ENCODE measurements at regions of chr12 and their contacts with region 1.

Region 1: DNA sequence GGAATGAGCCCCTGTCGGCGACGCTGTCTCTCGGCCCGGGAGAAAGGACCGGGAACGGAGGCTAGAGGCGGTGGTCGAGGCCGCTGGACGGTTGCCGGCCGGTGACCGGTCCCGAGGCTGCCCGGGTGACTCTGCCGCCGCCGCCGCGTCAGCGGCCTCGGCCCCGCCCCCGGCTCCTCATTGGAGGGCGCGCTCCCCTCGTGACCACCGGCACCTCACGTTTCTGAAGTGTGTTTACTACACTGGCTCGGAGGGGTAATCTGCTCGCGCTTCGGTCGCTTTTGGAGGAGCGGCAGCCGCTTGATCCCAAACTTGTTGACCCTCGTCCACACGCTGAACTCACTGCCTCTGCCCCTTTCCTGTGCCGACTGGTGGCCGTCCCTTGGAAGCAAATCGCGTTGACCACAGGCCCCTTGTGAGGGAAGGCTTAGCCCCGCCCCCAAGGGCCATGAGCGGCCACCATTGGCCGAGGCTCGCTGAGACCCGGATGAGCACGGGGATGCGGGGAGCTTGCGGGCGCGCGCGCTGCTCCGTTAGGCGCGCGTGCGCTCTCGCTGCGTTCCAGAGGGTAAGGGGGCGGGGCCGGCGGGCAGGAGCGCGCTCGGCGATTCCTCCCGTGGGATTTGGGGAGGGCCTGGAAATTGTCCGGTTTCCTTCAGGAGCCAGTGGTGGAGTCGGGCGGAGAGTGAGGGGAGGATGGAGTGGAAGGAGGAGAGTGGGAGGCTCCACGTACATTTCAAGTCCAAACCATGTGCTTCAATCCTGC is at the start of gene CRY1:
- DNase-seq: peak; percentile 93
- H3K4me3 ChIP-seq: peak within 1 kb of the TSS; percentile 93
- H3K27ac ChIP-seq: peak within 1 kb of the TSS; percentile 93 to 97
- H3K4me1 ChIP-seq: peaks cover 4% of the 10 kb centered on the region
- H3K27me3 ChIP-seq: no peaks in the 10 kb centered on the region
- CTCF ChIP-seq: no peak
- POLR2A ChIP-seq: peak; percentile 83
- total RNA-seq, gene CRY1: 15.7 to 35.2 TPM

Region 2: GRCh38 chr12:106774005-106774807 is 319.4 kb before region 1 on chr12 and contains the start of gene RIC8B:
- intact Hi-C with region 1: loop called (anchors 10 kb)
- DNase-seq: peak; percentile 95
- H3K4me3 ChIP-seq: peak within 1 kb of the TSS; percentile 84 to 87
- H3K27ac ChIP-seq: peak within 1 kb of the TSS; percentile 90 to 95
- H3K4me1 ChIP-seq: peaks cover 4% of the 10 kb centered on the region
- H3K27me3 ChIP-seq: no peaks in the 10 kb centered on the region
- CTCF ChIP-seq: peak in 2 of 4 experiments; percentile 27 to 38
- POLR2A ChIP-seq: peak; percentile 49
- total RNA-seq, gene RIC8B: 9.2 to 12.4 TPM

Region 3: DNA sequence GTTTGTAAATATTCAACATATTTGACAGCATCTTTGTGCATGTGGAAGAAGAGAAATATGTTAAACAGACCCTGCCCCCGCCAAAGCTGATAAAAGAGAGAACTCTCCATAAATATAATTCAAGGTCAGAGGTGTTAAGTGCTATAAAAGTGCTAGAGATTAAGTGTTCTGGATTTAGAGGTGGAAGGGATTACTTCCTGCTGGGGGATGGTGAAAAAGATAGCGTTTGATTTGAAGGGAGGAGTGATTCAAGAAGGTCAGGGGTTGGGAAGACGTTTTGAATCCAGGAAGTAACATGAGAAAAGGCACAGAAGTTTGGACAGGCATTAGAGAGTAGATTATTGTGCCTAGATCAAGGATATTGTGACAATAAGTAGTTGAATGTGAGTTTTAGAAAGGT is 288.9 kb before region 1 on chr12:
- intact Hi-C with region 1: no loop called
- DNase-seq: no peak
- H3K4me3 ChIP-seq: no peak overlapping the region
- H3K27ac ChIP-seq: no peak overlapping the region
- H3K4me1 ChIP-seq: no peaks in the 10 kb centered on the region
- H3K27me3 ChIP-seq: no peaks in the 10 kb centered on the region
- CTCF ChIP-seq: no peak
- POLR2A ChIP-seq: no peak

Region 4: DNA sequence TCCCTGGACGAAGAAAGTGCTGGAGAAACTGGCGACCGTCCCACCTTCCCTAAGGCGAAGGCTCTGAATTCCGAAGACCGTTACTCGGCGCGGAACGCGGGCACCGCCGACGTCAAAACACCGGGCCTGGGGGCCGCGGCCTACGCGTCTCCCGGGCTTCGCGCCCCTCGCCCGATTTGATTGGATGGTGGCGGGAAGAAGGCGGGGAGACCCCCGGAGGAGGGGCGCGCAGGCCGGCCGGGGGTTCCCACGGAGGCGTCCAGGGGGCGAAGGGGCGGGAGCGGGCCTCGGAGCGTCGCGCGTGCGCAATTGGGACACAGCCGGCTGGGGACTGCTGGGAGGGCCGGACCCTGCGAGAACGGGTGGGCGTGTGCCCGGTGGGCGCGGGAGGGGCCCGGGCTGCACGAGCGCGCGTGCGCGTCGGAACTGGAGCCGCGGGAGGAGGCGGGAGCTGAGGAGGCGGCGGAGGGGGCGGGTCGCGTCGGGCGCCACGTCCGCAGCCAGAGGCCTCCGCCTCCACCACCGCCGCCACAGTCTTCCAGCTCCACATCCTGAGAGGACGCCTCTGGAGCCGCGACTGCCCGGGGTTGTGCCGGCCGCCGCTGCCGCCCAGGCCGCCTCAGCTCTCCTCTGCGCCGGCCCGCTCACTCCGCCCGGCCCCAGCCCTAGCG is 138.1 kb before region 1 on chr12 and contains the start of gene TMEM263:
- intact Hi-C with region 1: loop called (anchors 2 kb)
- DNase-seq: peak; percentile 89
- H3K4me3 ChIP-seq: peak within 1 kb of the TSS; percentile 98 to 99
- H3K27ac ChIP-seq: peak within 1 kb of the TSS; percentile 96 to 98
- H3K4me1 ChIP-seq: no peaks in the 10 kb centered on the region
- H3K27me3 ChIP-seq: no peaks in the 10 kb centered on the region
- CTCF ChIP-seq: peak in 2 of 4 experiments; percentile 16 to 19
- POLR2A ChIP-seq: peak; percentile 92
- total RNA-seq, gene TMEM263: 41.7 to 44.4 TPM

Region 5: GRCh38 chr12:106986625-106987430 is 106.8 kb before region 1 on chr12 and contains the start of gene MTERF2:
- intact Hi-C with region 1: loop called (anchors 1 kb)
- DNase-seq: peak; percentile 92
- H3K4me3 ChIP-seq: peak within 1 kb of the TSS; percentile 55 to 60
- H3K27ac ChIP-seq: peak within 1 kb of the TSS; percentile 86 to 87
- H3K4me1 ChIP-seq: peaks cover 5% of the 10 kb centered on the region
- H3K27me3 ChIP-seq: no peaks in the 10 kb centered on the region
- CTCF ChIP-seq: peak in 1 of 4 experiments; percentile 13
- POLR2A ChIP-seq: peak; percentile 80
- total RNA-seq, gene MTERF2: 11.3 to 18.1 TPM

Region 6: DNA sequence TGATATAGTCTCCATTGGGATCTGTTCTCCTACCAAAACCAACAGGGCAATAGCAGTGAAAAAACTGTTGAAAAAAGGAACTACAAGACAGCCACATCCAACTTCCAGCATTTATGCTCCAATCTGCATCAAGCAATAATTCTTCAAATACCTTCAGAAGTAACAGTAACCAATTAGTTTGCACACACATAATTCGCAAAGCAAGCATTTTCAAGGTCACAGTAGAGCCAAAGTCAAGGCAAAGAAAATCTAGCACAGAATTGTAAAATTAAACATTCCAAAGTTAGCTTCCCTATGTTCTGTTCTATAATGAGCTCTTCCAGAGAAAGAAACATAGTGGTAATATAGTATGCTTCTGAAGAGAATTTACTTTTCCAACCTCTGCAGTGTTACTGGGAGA is 95.7 kb before region 1 on chr12:
- intact Hi-C with region 1: no loop called
- DNase-seq: no peak
- H3K4me3 ChIP-seq: no peak overlapping the region
- H3K27ac ChIP-seq: no peak overlapping the region
- H3K4me1 ChIP-seq: no peaks in the 10 kb centered on the region
- H3K27me3 ChIP-seq: no peaks in the 10 kb centered on the region
- CTCF ChIP-seq: no peak
- POLR2A ChIP-seq: no peak

Region 7: GRCh38 chr12:107027636-107028053 is 66.0 kb before region 1 on chr12:
- intact Hi-C with region 1: loop called (anchors 2 kb)
- DNase-seq: peak; percentile 49
- H3K4me3 ChIP-seq: no peak overlapping the region
- H3K27ac ChIP-seq: peak overlapping the region; percentile 79 to 81
- H3K4me1 ChIP-seq: peaks cover 5% of the 10 kb centered on the region
- H3K27me3 ChIP-seq: no peaks in the 10 kb centered on the region
- CTCF ChIP-seq: no peak
- POLR2A ChIP-seq: no peak